Transverse colon (tissue), 4 donors: ENCODE measurements at regions of chr2 and their contacts with region 1.

Region 1: GRCh38 chr2:169066895-169067294 is 2.5 kb upstream of the DHRS9 start:
- DNase-seq: no peak
- H3K4me3 ChIP-seq: peak overlapping the region in 1 of 4 donors; percentile 33
- H3K27ac ChIP-seq: peak overlapping the region; percentile 56 to 79 (median 76)
- H3K4me1 ChIP-seq: peaks cover 0 to 52% (median 10%) of the 10 kb centered on the region in 4 donors
- H3K27me3 ChIP-seq: no peaks in the 10 kb centered on the region
- CTCF ChIP-seq: no peak
- EP300 ChIP-seq: no peak
- POLR2A ChIP-seq: peak; percentile 73

Region 2: GRCh38 chr2:169119126-169119770 is 52.4 kb after region 1 on chr2:
- in situ Hi-C with region 1: no loop called
- intact Hi-C with region 1: loop called (anchors 2 kb)
- DNase-seq: no peak
- H3K4me3 ChIP-seq: no peak overlapping the region
- H3K27ac ChIP-seq: no peak overlapping the region
- H3K4me1 ChIP-seq: no peaks in the 10 kb centered on the region
- H3K27me3 ChIP-seq: peaks cover 6% of the 10 kb centered on the region
- CTCF ChIP-seq: no peak
- EP300 ChIP-seq: no peak
- POLR2A ChIP-seq: no peak

Region 3: DNA sequence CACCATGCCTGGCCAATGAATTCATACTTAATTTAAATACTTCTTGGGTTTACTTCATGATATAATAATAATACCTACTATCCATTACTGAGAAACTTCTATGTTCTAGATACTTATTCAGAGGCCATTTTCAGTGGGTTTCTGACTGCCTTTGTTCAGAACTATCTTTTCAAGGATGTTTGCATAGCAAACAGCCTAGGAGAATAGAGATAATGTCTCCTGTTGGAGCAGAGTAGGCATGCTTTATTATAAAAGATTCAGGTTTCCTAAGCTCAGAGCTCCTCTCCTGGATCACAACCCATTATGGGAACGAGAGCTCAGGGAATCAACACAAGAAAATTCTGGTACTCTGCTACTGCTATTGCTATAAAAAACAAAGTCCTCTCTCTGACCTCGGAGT is 495.6 kb after region 1 on chr2:
- in situ Hi-C with region 1: no loop called
- intact Hi-C with region 1: no loop called
- DNase-seq: no peak
- H3K4me3 ChIP-seq: no peak overlapping the region
- H3K27ac ChIP-seq: no peak overlapping the region
- H3K4me1 ChIP-seq: no peaks in the 10 kb centered on the region
- H3K27me3 ChIP-seq: no peaks in the 10 kb centered on the region
- CTCF ChIP-seq: no peak
- EP300 ChIP-seq: no peak
- POLR2A ChIP-seq: no peak

Region 4: DNA sequence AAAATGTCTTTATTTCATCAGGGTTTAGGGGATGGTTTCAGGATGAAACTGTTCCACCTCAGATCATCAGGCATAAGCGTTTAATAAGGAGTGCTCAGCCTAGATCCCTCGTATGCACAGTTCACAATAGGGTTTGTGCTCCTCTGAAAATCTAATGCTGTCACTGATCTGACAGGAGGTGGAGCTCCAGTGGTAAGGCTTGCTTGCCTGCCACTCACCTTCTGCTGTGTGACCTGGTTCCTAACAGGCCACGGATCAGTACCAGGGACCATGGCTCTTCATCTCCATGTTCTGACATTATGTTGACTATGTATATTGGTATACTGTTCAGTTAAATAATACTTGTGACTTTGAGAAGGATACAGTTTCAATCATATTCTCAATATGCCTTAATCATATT is 558.9 kb after region 1 on chr2:
- in situ Hi-C with region 1: no loop called
- intact Hi-C with region 1: no loop called
- DNase-seq: no peak
- H3K4me3 ChIP-seq: no peak overlapping the region
- H3K27ac ChIP-seq: no peak overlapping the region
- H3K4me1 ChIP-seq: no peaks in the 10 kb centered on the region
- H3K27me3 ChIP-seq: no peaks in the 10 kb centered on the region
- CTCF ChIP-seq: no peak
- EP300 ChIP-seq: no peak
- POLR2A ChIP-seq: no peak